Tibial artery (tissue), 4 donors: ENCODE measurements at regions of chr5 and their contacts with region 1.

Region 1: DNA sequence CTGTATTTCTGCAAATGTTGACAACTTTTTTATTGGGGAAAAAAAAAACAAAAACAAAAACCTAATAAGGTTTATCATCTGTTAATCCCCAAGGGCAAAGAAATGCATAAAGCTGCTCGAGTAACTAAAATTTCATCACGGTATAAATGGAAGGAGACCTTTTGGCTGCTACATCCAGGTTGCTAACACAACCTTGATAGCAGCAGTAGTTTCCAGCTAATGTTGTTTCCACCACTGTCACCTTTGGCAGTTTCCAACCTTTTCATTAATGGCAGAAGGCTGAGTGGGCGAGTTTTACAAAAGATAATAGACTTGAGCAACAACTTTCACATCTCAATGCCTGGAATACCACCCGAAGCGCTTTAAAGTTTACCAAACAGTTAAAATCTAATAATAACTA is 8.5 kb downstream of the PAIP1 start:
- DNase-seq: no peak
- H3K4me3 ChIP-seq: no peak overlapping the region
- H3K27ac ChIP-seq: no peak overlapping the region
- H3K4me1 ChIP-seq: peaks cover 0 to 32% (median 8%) of the 10 kb centered on the region in 4 donors
- H3K27me3 ChIP-seq: no peaks in the 10 kb centered on the region
- CTCF ChIP-seq: no peak

Region 2: DNA sequence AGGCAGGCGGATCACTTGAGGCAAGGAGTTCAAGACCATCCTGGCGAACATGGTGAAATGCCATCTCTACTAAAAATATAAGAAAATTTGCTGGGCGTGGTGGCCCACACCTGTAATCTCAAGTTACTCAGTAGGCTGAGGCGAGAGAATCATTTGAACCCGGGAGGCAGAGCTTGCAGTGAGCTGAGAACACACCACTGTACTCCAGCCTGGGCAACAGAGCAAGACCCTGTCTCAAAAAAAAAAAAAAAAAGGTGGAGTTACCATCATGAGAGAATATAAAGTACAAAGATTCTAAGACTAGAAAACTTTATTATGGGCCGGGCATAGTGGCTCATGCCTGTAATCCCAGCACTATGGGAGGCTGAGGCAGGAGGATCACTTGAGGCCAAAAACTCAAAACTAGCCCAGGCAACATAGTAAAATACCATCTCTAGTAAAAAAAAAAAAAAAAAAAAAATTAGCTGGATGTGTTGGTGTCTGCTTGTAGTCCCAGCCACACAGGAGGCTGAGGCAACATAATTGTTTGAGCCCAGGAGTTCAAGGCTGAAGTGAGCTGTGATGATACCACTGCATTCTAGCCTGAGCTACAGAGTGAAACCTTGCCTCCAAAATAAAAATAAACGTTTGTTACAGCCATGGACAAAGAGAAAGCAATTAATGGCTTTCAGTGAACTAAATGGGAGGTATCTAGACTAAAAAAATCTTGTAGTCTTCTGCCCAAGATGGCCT is 521.1 kb before region 1 on chr5:
- intact Hi-C with region 1: loop called (anchors 5 kb)
- DNase-seq: no peak
- H3K4me3 ChIP-seq: no peak overlapping the region
- H3K27ac ChIP-seq: no peak overlapping the region
- H3K4me1 ChIP-seq: no peaks in the 10 kb centered on the region
- H3K27me3 ChIP-seq: no peaks in the 10 kb centered on the region
- CTCF ChIP-seq: no peak